Aorta (tissue), 5 donors: ENCODE measurements at regions of chr1 and their contacts with region 1.

Region 1: GRCh38 chr1:6245086-6245868 is 1.3 kb downstream of the HES3 start:
- DNase-seq: peak; percentile 85 to 94
- ATAC-seq: peak; percentile 83
- H3K4me3 ChIP-seq: no peak overlapping the region
- H3K27ac ChIP-seq: no peak overlapping the region
- H3K4me1 ChIP-seq: no peaks in the 10 kb centered on the region
- H3K27me3 ChIP-seq: peaks cover 0 to 2% of the 10 kb centered on the region in 2 donors

Region 2: DNA sequence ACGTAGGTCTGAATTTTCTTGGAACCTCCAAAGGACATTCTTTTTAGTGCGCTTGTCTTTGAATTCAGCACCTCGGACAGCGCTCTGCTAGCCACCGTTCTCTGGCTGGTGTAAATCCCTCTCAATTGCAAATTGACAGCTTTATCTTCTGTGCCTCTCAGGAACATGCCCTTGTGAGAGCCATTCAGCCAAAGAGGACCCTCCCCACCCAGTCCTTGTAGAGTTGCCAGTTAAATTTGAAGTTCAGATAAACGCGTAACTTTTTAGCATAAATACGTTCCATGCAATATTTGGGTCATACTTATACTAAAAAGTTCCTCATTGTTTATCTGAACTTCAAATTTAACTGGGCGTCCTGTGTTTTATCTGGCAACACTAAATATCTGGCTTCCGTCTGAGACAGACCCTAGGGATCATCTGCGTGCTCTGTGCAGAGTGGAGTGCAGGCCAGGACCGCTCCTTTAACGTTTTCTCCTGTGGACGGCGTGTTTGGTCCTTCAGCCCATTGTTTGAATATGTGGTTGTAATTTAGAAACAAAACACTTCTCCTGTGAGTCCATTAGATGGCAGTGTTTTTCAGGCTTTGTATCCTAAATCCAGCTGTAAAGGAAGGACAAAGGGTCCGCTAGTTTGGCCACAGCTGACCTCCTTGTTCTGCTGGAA is 192.6 kb before region 1 on chr1:
- intact Hi-C with region 1: loop called (anchors 2 to 10 kb)
- DNase-seq: peak; percentile 69 to 87
- ATAC-seq: peak; percentile 53
- H3K4me3 ChIP-seq: no peak overlapping the region
- H3K27ac ChIP-seq: no peak overlapping the region
- H3K4me1 ChIP-seq: no peaks in the 10 kb centered on the region
- H3K27me3 ChIP-seq: no peaks in the 10 kb centered on the region

Region 3: DNA sequence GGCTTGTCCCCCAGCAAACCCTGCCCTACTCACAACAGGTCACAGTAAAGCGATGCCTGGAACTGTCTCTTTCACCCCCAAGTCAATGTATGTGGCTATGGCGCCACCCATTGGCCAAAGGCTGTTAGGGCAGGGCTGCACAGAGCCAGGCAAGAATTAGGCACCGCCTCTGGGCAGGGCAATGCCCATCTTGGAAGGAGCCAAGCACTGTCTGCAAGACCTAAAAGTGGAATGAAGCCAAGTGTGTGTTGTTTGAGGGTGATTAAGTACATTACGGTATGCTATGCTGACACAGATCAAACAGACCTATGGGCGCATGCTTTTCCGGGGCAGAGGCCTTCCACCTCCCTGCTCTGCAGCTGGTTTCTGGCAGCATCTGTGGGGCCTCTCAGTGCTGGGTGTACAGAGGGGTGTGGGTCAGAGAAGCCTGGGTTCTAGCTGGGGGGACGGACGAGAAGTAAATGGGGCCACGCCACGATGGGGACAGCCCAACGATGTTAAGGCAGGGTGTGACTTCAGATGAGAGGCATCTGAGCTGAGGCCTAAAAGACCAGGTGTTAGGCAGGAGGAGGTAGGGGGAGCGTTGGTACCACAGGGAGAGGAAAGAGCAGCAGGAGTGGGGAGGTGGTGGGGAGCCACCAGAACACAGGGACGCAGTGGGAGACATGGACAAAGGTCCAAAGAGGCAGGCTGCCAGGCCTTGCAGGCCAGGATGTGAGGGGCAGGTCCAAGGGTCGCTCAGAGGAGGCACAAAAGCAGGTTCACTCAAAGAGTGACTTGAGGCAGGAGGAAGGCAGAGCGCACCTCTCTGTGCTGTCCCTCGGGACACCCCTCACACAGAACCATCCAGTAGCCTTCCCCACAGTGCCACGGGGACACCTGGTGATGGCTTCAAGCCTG is 98.5 kb after region 1 on chr1:
- intact Hi-C with region 1: loop called (anchors 2 to 5 kb)
- DNase-seq: peak in 1 of 2 donors; percentile 65
- ATAC-seq: peak; percentile 83
- H3K4me3 ChIP-seq: no peak overlapping the region
- H3K27ac ChIP-seq: no peak overlapping the region
- H3K4me1 ChIP-seq: no peaks in the 10 kb centered on the region
- H3K27me3 ChIP-seq: no peaks in the 10 kb centered on the region

Region 4: DNA sequence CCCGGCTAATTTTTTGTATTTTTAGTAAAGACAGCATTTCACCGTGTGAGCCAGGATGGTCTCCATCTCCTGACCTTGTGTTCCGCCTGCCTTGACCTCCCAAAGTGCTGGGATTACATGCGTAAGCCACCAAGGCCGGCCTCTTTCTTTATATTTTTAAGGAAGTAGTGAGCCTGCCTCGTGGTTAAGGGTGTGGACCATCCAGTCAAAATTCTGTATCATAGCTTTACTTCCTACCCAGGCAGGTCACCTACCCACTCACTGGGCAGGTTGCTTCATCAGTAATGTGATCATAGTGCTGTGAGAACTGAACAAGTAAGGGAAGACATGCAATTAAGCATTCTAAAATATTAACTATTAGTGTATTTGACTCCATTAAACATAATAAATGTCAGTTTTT is 156.4 kb after region 1 on chr1:
- intact Hi-C with region 1: loop called (anchors 2 kb)
- DNase-seq: no peak
- ATAC-seq: no peak
- H3K4me3 ChIP-seq: no peak overlapping the region
- H3K27ac ChIP-seq: no peak overlapping the region
- H3K4me1 ChIP-seq: no peaks in the 10 kb centered on the region
- H3K27me3 ChIP-seq: no peaks in the 10 kb centered on the region

Region 5: GRCh38 chr1:6438047-6438525 is 192.8 kb after region 1 on chr1:
- intact Hi-C with region 1: loop called in 1 of 2 experiments (anchors 1 kb)
- DNase-seq: peak in 1 of 2 donors; percentile 87
- ATAC-seq: peak; percentile 72
- H3K4me3 ChIP-seq: no peak overlapping the region
- H3K27ac ChIP-seq: no peak overlapping the region
- H3K4me1 ChIP-seq: no peaks in the 10 kb centered on the region
- H3K27me3 ChIP-seq: no peaks in the 10 kb centered on the region